ENCODE measurements at regions of chr18 and their contacts with region 1.

Region 1: GRCh38 chr18:22169007-22169864 is at the start of gene GATA6:
- DNase-seq: peak; percentile 64
- H3K4me3 Mint-ChIP-seq: peak within 1 kb of the TSS; percentile 88
- H3K27ac Mint-ChIP-seq: peak within 1 kb of the TSS; percentile 77
- H3K4me1 Mint-ChIP-seq: peaks cover 17% of the 10 kb centered on the region
- H3K27me3 Mint-ChIP-seq: peaks cover 76% of the 10 kb centered on the region
- total RNA-seq, gene GATA6: not detected in 2 replicates

Region 2: DNA sequence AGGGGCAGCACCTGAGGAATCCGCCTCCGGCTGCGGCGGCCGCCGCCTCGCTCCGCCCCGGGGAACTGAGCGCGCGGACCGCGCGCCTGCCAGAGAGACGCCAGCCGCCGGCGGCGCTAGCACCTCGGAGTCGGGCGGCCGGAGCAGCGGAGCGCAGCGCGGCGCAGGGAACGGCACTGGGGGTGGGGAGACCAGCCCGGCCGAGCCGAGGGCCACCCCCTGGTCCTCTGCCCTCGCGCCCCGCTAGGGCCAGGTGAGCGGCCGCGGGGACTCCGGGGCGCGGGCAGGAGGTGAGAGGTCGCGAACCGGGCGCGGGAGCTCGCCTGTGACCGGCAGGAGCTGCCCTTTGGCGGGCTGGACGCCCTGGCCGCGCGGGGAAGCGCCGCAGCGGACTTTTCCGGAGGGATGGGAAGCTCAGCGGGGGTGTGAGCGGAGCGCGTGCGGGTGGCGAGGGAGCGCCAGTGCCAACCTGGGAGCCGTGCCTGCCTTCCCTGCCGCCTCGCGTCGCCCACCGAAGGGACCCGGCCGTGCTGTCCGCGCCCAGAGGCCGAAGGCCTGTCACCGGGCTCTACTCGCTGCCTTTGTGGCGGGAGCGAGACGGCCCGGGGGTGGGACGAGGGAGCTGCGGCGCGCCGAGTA is 927.0 kb before region 1 on chr18 and contains the start of gene GREB1L:
- intact Hi-C with region 1: loop called (anchors 5 kb)
- DNase-seq: peak; percentile 66
- H3K4me3 Mint-ChIP-seq: peak within 1 kb of the TSS; percentile 19
- H3K27ac Mint-ChIP-seq: no peak within 1 kb of the TSS
- H3K4me1 Mint-ChIP-seq: no peaks in the 10 kb centered on the region
- H3K27me3 Mint-ChIP-seq: peaks cover 59% of the 10 kb centered on the region
- total RNA-seq, gene GREB1L: not detected in 2 replicates

Region 3: DNA sequence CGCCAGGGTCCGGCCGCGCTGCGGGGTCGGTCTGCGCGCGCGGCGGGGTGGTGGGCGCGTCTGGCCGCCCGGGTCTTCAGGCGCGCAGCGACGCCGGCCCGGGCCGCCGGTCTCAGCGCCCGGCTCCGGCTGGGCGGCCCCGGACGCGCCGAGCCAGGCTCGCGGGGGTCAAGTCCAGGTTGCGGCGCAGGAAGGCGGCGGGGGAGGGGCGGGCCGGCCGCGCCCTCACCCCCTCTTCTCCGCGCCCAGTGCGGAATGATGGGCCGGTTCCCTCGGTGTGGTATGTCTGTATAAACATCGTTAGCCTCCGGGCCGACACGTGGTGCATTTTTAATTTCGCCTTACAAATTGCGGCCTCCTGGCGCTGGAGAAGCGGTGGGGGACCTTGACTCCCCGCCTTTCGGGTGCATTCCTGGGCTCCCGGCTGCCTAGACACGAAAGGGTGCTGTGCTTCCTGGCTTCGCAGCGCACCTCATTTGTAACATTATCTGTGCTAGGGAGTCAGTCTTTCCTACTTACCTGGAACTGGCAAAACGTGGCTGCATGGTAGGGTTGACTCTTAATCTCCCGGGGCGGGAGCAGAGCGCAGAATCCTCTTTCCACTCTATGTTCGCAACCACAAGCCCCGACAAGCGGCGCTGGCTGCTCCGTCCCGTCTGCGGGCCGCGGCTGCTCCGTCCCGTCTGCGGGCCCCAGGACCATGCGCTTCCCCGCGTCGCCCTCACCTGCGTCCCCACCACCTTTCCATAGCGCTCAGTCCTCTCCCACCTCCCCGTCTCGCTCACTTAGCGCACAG is 179.5 kb after region 1 on chr18:
- intact Hi-C with region 1: loop called (anchors 5 kb)
- DNase-seq: no peak
- H3K4me3 Mint-ChIP-seq: no peak overlapping the region
- H3K27ac Mint-ChIP-seq: no peak overlapping the region
- H3K4me1 Mint-ChIP-seq: peaks cover 3% of the 10 kb centered on the region
- H3K27me3 Mint-ChIP-seq: peaks cover 49% of the 10 kb centered on the region

Region 4: DNA sequence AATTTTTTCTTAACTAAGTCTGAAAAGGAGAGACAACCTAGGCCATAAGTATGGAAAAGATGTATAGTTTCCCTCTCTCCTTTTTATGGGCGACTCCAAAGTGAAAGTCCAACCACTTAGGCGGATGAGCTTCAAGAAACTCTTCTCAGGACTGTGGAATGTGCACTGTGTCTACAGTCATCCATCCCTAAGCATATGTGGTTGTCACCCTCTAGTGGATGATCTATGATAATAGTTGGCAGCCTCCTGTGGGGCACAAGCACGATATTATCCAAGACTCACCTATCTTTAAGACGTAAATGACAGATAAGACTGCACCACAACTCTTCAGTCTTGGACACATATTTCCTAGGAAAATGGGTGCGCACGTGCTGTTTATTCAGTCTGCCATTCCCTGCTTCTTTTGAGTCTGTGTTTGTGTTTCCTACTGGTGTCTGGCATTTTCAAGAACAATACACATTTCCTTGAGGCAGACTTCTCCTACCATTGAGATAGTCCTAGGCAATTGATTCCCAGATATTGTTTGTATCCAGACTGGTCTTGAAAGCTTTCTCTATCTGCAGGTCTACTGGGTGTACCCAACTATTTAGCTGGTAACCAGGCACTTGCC is 394.0 kb after region 1 on chr18:
- intact Hi-C with region 1: loop called (anchors 5 kb)
- DNase-seq: no peak
- H3K4me3 Mint-ChIP-seq: no peak overlapping the region
- H3K27ac Mint-ChIP-seq: no peak overlapping the region
- H3K4me1 Mint-ChIP-seq: peaks cover 2% of the 10 kb centered on the region
- H3K27me3 Mint-ChIP-seq: peaks cover 24% of the 10 kb centered on the region

Measured in activated CD4-positive, alpha-beta T cell treated with anti-CD3 and anti-CD28 coated beads, Interleukin-2, amount 10 ng/mL, durations not matched to agents 24 days and 14 days (primary cell).